ENCODE measurements at regions of chr3 and their contacts with region 1.

Region 1: GRCh38 chr3:66047311-66048050 is 8.8 kb upstream of the MAGI1 start:
- DNase-seq: peak in 1 of 2 donors; percentile 23
- ATAC-seq: peak in 7 of 8 donors; percentile 71 to 87 (median 74)
- H3K4me3 ChIP-seq: no peak overlapping the region
- H3K27ac ChIP-seq: peak overlapping the region in 5 of 10 donors; percentile 41 to 70 (median 63)
- H3K4me1 ChIP-seq: peaks cover 0 to 18% (median 11%) of the 10 kb centered on the region in 9 donors
- H3K27me3 ChIP-seq: no peaks in the 10 kb centered on the region
- CTCF ChIP-seq: peak in 1 of 9 donors; percentile 9

Region 2: GRCh38 chr3:65793495-65794199 is 253.8 kb before region 1 on chr3:
- intact Hi-C with region 1: loop called in 1 of 10 experiments (anchors 10 kb)
- DNase-seq: no peak
- ATAC-seq: no peak
- H3K4me3 ChIP-seq: no peak overlapping the region
- H3K27ac ChIP-seq: no peak overlapping the region
- H3K4me1 ChIP-seq: peaks cover 0 to 27% (median 0%) of the 10 kb centered on the region in 9 donors
- H3K27me3 ChIP-seq: no peaks in the 10 kb centered on the region
- CTCF ChIP-seq: no peak

Region 3: GRCh38 chr3:66138336-66139313 is 91.1 kb after region 1 on chr3:
- intact Hi-C with region 1: loop called in 1 of 10 experiments (anchors 5 kb)
- DNase-seq: peak in 1 of 2 donors; percentile 65
- ATAC-seq: peak; percentile 79 to 94 (median 88)
- H3K4me3 ChIP-seq: no peak overlapping the region
- H3K27ac ChIP-seq: peak overlapping the region in 3 of 10 donors; percentile 46 to 52 (median 51)
- H3K4me1 ChIP-seq: peaks cover 0 to 10% (median 9%) of the 10 kb centered on the region in 9 donors
- H3K27me3 ChIP-seq: no peaks in the 10 kb centered on the region
- CTCF ChIP-seq: peak; percentile 68 to 88 (median 82)

Measured in heart right ventricle (tissue), 16 donors.